ENCODE measurements at regions of chr16 and their contacts with region 1.

Region 1: DNA sequence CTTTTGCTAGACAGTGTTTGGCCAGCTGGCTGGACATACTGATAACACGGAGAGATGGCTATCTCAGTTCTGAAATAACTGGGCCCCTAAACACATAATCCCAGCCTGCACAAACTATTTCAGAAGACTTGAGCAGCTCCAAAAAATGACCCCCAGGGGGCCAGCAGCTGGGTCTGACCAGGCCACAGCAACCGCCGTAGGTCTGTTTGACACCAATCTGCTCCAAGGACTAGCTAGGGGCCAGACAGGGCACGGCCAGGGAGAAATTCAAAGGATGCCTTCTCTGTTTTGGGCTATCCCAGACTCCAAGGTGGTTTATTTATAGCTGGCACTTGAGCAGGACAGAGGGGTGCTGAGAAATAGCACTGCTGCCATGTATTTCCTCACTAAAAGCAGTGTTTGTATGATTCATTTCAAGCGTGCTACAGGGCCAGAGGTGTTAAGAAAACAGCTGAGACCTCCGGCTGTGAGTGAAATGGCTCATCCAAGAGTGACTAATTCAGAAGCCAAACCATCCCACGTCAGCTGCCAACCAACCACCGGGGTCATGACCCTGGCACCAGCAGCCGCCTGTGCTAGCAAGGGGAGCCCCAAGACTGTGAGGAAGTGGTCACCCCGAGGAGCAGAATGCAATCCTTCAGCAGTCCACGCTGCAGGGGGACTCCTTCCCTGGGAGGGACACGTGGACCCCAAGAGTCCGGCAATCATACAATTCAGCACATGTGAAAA is 5.7 kb downstream of the GGA2 start:
- DNase-seq: peak; percentile 76 to 85
- ATAC-seq: peak; percentile 84 to 91 (median 91)
- H3K4me3 ChIP-seq: no peak overlapping the region
- H3K4me3 Mint-ChIP-seq: peak overlapping the region; percentile 53
- H3K27ac ChIP-seq: peak overlapping the region; percentile 78
- H3K27ac Mint-ChIP-seq: peak overlapping the region; percentile 87 to 95
- H3K4me1 ChIP-seq: peaks cover 51% of the 10 kb centered on the region
- H3K4me1 Mint-ChIP-seq: peaks cover 64 to 72% of the 10 kb centered on the region in 2 donors
- H3K27me3 ChIP-seq: no peaks in the 10 kb centered on the region
- H3K27me3 Mint-ChIP-seq: no peaks in the 10 kb centered on the region
- CTCF ChIP-seq: no peak

Region 2: DNA sequence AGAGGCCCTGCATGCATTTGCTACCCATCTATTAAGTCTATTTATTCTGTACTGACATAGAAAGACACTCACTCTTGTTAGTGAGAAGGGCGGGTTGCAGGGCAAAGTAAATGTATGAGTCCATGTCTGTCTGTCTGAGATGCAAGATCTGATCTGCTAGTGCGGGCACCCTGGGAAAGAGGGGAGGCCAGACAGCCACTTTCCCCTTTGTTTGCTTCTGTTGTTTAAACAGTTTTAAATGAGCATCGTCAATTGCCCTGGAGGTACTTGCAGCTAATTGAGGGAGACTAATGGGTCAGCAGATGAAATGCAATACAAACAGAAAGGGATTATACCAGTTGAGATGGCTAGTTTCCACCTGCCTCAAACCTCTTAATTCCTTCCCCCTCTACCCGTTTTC is 297.1 kb before region 1 on chr16:
- intact Hi-C with region 1: no loop called
- DNase-seq: no peak
- ATAC-seq: no peak
- H3K4me3 ChIP-seq: no peak overlapping the region
- H3K4me3 Mint-ChIP-seq: no peak overlapping the region
- H3K27ac ChIP-seq: no peak overlapping the region
- H3K27ac Mint-ChIP-seq: no peak overlapping the region
- H3K4me1 ChIP-seq: no peaks in the 10 kb centered on the region
- H3K4me1 Mint-ChIP-seq: no peaks in the 10 kb centered on the region
- H3K27me3 ChIP-seq: no peaks in the 10 kb centered on the region
- H3K27me3 Mint-ChIP-seq: peaks cover 14 to 16% of the 10 kb centered on the region in 2 donors
- CTCF ChIP-seq: no peak

Region 3: DNA sequence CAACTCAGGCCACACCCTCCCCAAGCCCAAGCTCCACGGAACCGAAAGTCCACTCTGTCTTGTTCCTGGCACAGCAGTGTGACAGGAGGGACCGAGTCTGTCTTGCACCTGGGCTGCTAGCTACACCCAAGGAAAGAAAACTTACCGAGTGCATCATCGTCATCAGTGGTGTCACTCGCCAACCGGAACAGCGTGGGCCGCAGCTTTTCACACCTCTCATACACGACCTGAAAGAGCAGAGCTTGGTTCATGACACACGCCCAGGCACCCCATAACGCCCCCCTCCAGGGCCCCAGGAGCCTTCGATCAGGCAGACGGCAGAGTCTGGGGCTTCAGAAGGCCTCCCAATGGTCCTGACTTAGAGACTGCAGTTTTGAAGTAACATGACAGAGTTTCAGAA is 21.8 kb before region 1 on chr16:
- intact Hi-C with region 1: loop called (anchors 1 kb)
- DNase-seq: peak; percentile 22 to 87
- ATAC-seq: peak; percentile 77 to 80 (median 79)
- H3K4me3 ChIP-seq: no peak overlapping the region
- H3K4me3 Mint-ChIP-seq: no peak overlapping the region
- H3K27ac ChIP-seq: peak overlapping the region; percentile 75
- H3K27ac Mint-ChIP-seq: peak overlapping the region; percentile 74 to 87
- H3K4me1 ChIP-seq: no peaks in the 10 kb centered on the region
- H3K4me1 Mint-ChIP-seq: peaks cover 0 to 5% of the 10 kb centered on the region in 2 donors
- H3K27me3 ChIP-seq: no peaks in the 10 kb centered on the region
- H3K27me3 Mint-ChIP-seq: no peaks in the 10 kb centered on the region
- CTCF ChIP-seq: no peak